HepG2 (cell line): ENCODE measurements at regions of chr12 and their contacts with region 1.

Region 1: GRCh38 chr12:120971299-120972179 is 6.8 kb upstream of the HNF1A start:
- DNase-seq: peak; percentile 45
- ATAC-seq: peak; percentile 34
- H3K4me3 ChIP-seq: no peak overlapping the region
- H3K27ac ChIP-seq: no peak overlapping the region
- H3K4me1 ChIP-seq: peaks cover 41% of the 10 kb centered on the region
- H3K27me3 ChIP-seq: no peaks in the 10 kb centered on the region
- CTCF ChIP-seq: peak; percentile 74
- EP300 ChIP-seq: no peak
- POLR2A ChIP-seq: no peak
- RAD21 ChIP-seq: peak; percentile 59; the same call in 1 of the 2 replicates

Region 2: GRCh38 chr12:120904197-120904773 is 67.3 kb before region 1 on chr12 and contains the start of gene SPPL3:
- CTCF ChIA-PET with region 1: no interaction called
- POLR2A ChIA-PET with region 1: interaction called, 5 read pairs
- in situ Hi-C with region 1: no loop called
- intact Hi-C with region 1: loop called (anchors 10 kb)
- DNase-seq: peak; percentile 75
- ATAC-seq: peak; percentile 63
- H3K4me3 ChIP-seq: peak within 1 kb of the TSS; percentile 96 to 98 (median 97)
- H3K27ac ChIP-seq: peak within 1 kb of the TSS; percentile 74
- H3K4me1 ChIP-seq: peaks cover 53% of the 10 kb centered on the region
- H3K27me3 ChIP-seq: peaks cover 0 to 4% of the 10 kb centered on the region in 2 experiments; a peak in 1 of 5 replicates
- CTCF ChIP-seq: peak; percentile 48
- EP300 ChIP-seq: no peak
- POLR2A ChIP-seq: peak; percentile 27 to 57; a peak in 2 of 4 replicates
- RAD21 ChIP-seq: peak; percentile 6; the same call in 1 of the 2 replicates
- total RNA-seq, gene SPPL3: 6.6 and 9.1 TPM in 2 replicates

Region 3: DNA sequence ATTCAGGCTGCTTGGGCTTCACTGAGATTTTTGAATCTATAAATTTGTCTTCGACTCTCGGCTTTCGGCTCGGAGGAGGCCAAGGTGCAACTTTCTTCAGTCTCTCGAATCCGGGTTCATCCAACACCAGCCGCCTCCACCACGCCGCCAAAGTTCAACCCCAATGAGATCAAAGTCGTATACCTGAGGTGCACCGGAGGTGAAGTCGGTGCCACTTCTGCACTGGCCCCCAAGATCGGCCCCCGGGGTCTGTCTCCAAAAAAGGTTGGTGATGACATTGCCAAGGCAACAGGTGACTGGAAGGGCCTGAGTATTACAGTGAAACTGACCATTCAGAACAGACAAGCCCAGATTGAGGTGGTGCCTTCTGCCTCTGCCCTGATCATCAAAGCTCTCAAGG is 54.9 kb before region 1 on chr12:
- CTCF ChIA-PET with region 1: no interaction called
- POLR2A ChIA-PET with region 1: no interaction called
- in situ Hi-C with region 1: no loop called
- intact Hi-C with region 1: no loop called
- DNase-seq: no peak
- ATAC-seq: no peak
- H3K4me3 ChIP-seq: no peak overlapping the region
- H3K27ac ChIP-seq: no peak overlapping the region
- H3K4me1 ChIP-seq: no peaks in the 10 kb centered on the region
- H3K27me3 ChIP-seq: no peaks in the 10 kb centered on the region; a peak in 2 of 5 replicates
- CTCF ChIP-seq: no peak
- EP300 ChIP-seq: no peak
- POLR2A ChIP-seq: no peak
- RAD21 ChIP-seq: no peak

Region 4: GRCh38 chr12:120999191-121000085 is 27.9 kb after region 1 on chr12:
- CTCF ChIA-PET with region 1: no interaction called
- POLR2A ChIA-PET with region 1: interaction called, 12 read pairs
- in situ Hi-C with region 1: no loop called
- intact Hi-C with region 1: no loop called
- DNase-seq: no peak
- ATAC-seq: peak; percentile 4; the same call in 1 of the 3 replicates
- H3K4me3 ChIP-seq: no peak overlapping the region
- H3K27ac ChIP-seq: no peak overlapping the region
- H3K4me1 ChIP-seq: peaks cover 16% of the 10 kb centered on the region; the same call in 1 of the 2 replicates
- H3K27me3 ChIP-seq: no peaks in the 10 kb centered on the region
- CTCF ChIP-seq: no peak
- EP300 ChIP-seq: no peak
- POLR2A ChIP-seq: peak in 1 of 2 experiments; percentile 32; a peak in 1 of 4 replicates
- RAD21 ChIP-seq: no peak